Activated T-helper 2 cell treated with anti-CD3 and anti-CD28 coated beads, Interferon-gamma antibody, Interleukin-2, Interleukin-4, amounts not matched to agents 10 μg/mL and 5 μg/mL and 100 μg/mL, durations not matched to agents 14 hours and 24 hours and 36 hours (primary cell): ENCODE measurements at regions of chr10 and their contacts with region 1.

Region 1: GRCh38 chr10:71771821-71772617 is 1.3 kb downstream of the VSIR start:
- DNase-seq: no peak
- H3K4me3 Mint-ChIP-seq: peak overlapping the region; percentile 86
- H3K27ac Mint-ChIP-seq: peak overlapping the region; percentile 97
- H3K4me1 Mint-ChIP-seq: peaks cover 64% of the 10 kb centered on the region
- H3K27me3 Mint-ChIP-seq: no peaks in the 10 kb centered on the region

Region 2: DNA sequence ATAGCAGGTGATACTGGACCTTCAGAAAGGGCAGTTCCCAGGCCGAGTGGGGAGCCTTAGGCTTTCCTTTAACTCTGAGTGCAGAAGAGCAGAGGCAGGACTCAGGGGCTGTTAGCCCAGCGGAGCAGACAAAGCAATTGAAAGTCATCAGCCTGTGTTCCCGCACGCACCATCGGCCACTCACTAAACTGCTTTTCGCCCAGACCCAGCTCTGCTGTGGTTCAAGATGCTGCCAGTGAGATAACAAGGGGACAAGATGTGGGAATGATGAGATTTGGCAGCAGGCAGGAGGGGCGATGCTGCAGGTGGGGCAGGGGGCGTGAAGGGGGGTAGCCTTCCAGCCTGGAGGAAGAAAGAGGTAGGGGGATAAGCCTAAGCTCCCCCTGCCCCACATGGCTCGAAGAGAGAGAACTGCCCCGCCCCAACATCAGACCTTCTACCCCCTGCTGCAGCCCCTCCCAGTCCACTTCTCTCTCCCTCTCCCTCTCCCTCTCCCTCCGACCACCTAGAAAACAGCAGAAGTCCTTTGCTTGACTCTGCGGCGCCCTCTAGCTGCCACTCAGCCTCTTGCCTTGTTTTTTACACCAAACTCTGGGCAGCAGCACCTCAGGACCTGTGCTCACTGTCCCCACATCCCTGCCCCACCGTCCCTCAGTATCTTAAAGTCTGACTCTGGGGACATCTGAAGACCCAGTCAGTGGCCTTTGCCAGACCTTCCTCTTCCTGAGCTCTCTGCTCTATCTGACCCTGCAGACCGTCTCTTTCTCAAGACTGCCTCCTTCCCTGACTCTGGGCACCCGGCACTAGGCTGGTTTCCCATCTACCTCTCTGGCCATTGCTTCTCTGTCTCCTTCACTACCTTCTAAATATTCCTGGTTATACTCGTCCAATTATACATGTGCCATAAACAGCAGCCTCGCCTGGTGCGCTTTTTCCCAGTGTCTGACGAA is 162.9 kb before region 1 on chr10:
- intact Hi-C with region 1: loop called (anchors 10 kb)
- DNase-seq: peak; percentile 34
- H3K4me3 Mint-ChIP-seq: no peak overlapping the region
- H3K27ac Mint-ChIP-seq: no peak overlapping the region
- H3K4me1 Mint-ChIP-seq: peaks cover 15% of the 10 kb centered on the region
- H3K27me3 Mint-ChIP-seq: peaks cover 3% of the 10 kb centered on the region

Region 3: DNA sequence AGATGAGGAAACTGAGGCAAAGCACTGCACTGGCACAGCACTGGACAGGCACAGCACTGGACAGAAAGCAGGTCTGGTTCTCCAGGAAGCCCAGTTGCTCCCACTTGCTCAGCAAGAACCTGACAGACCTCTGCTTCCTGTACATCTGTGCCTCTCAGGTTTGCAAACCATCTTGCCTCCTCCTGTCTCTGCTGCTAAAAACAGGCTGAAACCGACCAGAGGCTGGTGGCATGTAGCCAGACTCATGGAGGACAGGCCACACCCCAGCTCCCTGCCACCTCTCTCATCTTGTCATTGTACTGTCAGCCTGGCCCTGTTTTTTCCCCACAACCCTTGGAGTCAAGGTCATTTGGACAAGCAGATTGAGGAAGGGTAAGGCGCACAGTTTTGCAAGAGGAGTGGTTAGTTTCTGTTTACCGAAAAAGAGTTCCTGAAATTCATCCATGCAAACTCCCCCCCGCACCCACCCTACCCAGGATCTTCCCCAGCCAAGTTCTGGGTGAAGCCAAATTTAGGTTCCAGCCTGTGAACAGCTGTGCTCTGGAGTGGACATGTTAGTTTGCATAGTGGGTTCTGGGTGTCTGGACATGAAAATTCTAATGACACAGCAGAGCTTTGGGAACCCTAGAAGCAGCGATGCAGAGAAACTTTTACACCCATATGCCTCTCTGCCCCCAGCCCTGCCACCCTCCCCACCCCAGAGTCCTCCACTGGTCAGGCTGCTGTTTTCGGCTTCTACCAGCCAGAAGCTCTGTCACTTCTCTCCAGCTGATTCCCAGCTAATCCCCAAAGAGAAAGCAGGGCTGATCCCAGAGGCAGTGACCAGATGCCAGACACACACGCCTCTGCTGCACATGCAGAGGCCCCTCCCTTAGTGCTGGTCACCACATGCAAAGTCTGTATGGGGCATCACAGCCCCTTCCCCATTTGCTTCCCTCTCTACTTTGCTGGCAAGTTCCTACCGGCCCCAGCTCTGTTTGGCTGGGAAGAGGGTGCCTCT is 44.0 kb before region 1 on chr10:
- intact Hi-C with region 1: loop called (anchors 1 kb)
- DNase-seq: peak; percentile 41
- H3K4me3 Mint-ChIP-seq: peak overlapping the region; percentile 49
- H3K27ac Mint-ChIP-seq: peak overlapping the region; percentile 97
- H3K4me1 Mint-ChIP-seq: peaks cover 67% of the 10 kb centered on the region
- H3K27me3 Mint-ChIP-seq: no peaks in the 10 kb centered on the region

Region 4: DNA sequence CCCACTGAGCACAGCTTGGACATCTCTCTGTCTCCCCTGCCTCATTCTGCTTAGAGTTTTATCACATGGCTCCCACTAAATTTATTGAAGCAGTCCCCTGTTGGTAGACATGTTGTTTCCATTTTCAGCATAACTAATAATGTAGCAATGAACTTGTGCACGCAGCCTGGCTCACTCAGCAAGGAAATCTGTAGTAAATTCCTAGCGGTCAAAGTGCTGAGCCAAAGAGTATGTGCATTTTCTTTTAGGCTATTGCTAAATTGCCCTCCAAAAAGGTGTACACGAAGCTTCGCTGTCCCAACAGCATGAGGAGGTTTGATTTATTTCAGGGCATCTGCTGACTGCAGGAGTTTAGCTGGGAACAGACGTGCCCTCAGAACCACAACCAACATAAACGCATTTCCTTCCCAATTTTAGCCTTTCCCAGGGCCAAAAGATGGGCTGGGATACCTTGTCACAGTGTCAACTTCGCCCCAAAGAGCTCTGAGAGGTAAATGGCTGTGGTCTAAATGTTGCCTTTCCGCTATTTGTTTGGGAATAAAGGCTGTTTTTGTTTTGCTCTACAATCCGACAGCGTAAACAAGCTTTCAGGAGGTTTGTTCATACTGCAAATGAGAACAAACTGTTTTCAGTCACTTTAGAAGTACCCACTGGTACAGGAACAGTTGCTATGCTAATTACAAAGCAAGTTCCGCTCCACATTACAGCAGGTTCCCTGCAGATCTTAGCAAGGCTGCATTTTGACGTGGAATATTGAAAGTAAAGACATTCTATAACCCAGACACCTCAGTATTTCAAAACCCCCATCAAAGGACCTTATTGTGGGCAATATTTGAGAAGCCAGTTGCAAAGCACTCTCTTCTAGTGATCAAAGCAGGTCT is 15.5 kb before region 1 on chr10:
- intact Hi-C with region 1: loop called (anchors 1 kb)
- DNase-seq: no peak
- H3K4me3 Mint-ChIP-seq: no peak overlapping the region
- H3K27ac Mint-ChIP-seq: peak overlapping the region; percentile 73
- H3K4me1 Mint-ChIP-seq: peaks cover 60% of the 10 kb centered on the region
- H3K27me3 Mint-ChIP-seq: no peaks in the 10 kb centered on the region